Posterior vena cava (tissue), 2 donors: ENCODE measurements at regions of chr20 and their contacts with region 1.

Region 1: GRCh38 chr20:13336308-13337089 is 115.4 kb downstream of the ISM1 start:
- DNase-seq: no peak

Region 2: DNA sequence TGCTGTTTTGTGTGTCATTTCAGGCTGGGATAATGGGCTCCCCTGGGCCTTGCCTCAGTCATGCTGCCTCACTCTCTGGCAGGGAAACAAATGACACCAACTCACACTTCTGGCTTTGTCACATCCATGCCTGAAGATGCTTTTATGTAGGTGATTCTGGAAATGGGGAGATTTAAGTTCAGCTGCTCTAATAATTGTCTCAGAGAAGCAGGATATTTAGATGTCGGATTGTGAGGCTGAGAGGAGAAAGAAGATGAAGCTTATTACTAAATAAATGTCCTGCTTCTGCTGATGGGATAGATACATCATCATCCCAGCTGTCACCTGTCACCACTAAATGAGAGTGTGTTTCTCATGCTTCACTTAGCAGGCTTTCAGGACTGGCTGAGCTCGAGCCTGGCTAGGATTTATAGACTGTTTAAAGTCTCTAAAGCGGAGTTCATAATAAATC is 807.9 kb before region 1 on chr20:
- intact Hi-C with region 1: no loop called
- DNase-seq: no peak

Region 3: DNA sequence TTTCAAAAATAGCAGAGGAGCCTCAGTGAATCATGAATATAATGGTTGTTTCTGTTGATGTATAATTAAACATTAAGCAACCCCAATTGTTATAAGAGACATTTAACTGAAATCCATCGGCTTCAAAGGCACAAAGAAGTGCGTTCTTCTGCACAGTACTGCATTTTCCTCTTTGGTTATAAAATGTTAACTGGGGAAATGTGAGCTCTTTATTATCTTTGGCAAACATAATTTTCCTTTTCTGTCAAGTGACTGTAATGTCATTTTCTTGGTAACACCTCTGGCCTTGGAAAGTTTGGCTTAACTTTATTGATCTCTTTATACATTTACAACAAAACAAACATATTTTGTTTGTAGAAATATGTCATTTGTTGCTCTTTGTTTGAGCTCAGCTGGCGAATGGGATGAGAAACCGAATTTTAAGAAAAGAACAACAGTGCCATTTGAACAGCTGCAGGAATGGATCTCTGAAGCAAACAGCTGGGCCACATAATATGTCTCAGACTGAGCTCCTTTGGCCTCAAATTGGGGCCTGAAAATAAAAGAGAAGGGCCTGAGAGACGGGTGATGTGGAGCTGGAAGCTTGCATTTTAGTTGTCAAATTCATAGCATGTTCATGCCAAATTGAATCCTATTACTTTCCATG is 754.7 kb before region 1 on chr20:
- intact Hi-C with region 1: no loop called
- DNase-seq: no peak

Region 4: DNA sequence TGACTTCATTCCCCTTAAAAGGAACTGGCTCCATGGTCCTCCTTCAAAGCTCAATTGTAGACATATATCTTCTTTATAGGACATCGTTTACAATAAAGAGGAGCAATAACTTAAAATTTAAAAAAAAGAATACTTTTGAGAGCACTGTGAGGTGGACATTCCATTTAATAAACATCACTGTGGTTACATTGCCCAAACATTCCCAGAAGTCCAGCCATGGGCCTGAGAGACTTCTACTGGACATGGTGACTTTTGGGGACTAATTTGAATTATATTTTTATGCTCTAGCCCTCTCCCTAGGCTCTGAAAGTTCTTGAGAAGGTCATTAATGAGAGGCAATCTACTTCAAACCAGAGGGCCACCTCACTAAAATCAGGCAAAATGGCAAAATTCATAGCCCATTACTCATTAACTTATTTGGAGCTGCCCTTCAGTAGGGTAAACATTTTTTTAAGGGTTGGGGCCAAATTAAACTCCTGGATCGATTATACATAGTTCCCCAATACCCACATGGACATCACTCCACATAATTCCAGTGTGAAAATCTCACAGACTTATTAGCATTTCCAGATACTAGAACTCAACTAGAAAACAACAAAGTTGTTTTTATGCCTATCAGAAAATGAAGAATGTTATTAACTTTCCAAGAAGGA is 98.4 kb before region 1 on chr20:
- intact Hi-C with region 1: no loop called
- DNase-seq: no peak

Region 5: GRCh38 chr20:13302647-13303450 is 33.6 kb before region 1 on chr20:
- intact Hi-C with region 1: no loop called
- DNase-seq: no peak

Region 6: DNA sequence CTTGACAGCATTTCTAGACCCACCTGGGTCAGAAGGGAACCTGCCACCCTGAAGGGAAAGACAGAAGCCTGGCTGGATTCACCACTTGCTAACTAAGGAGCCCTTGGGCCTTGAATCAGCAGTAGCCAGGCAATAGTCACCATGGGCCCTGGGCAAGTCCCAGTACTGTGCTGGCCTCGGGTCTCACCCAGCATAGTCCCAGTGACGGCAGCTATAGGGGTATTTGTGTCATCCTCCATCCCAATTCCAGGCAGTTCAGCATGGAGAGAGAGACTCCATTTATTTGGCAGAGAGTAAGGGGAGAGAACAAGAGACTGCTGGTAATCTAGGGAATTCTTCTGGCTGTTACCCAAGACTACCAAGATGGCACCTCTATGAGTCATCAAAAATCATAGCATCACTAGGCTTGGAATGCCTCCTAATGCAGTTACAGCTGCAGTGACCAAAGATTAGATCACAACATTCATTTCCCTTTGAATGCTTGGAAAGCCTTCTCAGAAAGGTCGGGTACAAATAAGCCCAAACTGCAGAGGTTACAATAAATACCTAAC is 1661.2 kb after region 1 on chr20:
- intact Hi-C with region 1: loop called in 1 of 2 experiments (anchors 10 kb)
- DNase-seq: no peak